ENCODE measurements at regions of chr2 and their contacts with region 1.

Region 1: GRCh38 chr2:42859006-42859552 is 66.7 kb upstream of the HAAO start:
- DNase-seq: peak; percentile 68
- H3K4me3 ChIP-seq: no peak overlapping the region
- H3K27ac ChIP-seq: no peak overlapping the region
- H3K27me3 ChIP-seq: peaks cover under 1% of the 10 kb centered on the region
- CTCF ChIP-seq: peak; percentile 95

Region 2: GRCh38 chr2:42764096-42764495 is 95.0 kb before region 1 on chr2 and contains the start of gene OXER1:
- CTCF ChIA-PET with region 1: no interaction called
- POLR2A ChIA-PET with region 1: no interaction called
- DNase-seq: no peak
- H3K4me3 ChIP-seq: no peak within 1 kb of the TSS
- H3K27ac ChIP-seq: no peak within 1 kb of the TSS
- H3K27me3 ChIP-seq: no peaks in the 10 kb centered on the region
- CTCF ChIP-seq: no peak
- polyA plus RNA-seq, gene OXER1: 0.27 and 0.37 TPM in 2 replicates

Region 3: DNA sequence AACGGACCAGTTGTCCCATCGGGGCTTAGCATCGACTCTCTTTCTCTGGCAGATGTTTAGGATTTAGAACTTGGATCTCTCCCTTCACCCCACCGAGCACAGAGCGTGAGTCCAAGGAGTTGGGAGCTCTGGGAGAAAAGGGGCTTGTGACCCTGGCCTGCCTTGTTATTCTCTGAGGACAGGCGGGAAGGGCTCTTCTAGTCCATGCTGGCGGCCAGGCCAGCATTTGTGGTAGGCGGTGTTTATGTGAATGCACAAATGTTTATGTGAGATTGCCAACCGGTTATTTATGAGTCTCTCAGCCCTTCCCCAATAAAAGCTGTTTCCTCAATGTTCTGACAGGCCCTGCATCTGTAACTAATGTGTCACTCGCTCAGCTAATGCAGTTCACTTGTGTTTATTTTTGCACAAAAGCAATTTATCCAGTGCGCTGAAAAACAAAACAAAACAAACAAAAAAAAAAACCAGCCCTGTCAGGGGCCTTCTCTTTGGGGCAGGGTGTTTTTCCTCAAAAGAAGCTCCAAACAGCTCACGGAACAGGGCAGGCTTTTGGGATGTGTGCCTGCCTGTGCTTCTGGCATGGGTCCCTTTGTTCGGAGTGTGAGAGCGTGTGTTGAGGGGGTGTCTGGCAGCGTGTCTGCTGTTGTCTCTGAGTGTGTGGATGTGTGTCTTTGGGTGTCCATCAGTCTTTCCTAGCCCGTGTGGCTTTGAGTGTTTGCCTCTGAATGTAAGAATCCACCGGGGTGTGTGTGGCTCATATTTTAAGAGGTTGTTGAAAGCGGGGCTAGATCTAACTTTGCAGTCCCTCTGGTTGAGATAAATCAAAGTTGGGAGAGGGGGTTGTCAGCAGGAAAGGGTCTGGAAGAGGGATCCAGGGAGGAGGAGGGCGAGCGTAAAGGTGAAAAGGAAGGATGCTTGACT is 13.9 kb before region 1 on chr2:
- CTCF ChIA-PET with region 1: interaction called, 26 read pairs
- POLR2A ChIA-PET with region 1: no interaction called
- DNase-seq: peak; percentile 82
- H3K4me3 ChIP-seq: no peak overlapping the region
- H3K27ac ChIP-seq: peak overlapping the region; percentile 52
- H3K27me3 ChIP-seq: peaks cover 2% of the 10 kb centered on the region
- CTCF ChIP-seq: no peak

Region 4: GRCh38 chr2:42944779-42945415 is 85.8 kb after region 1 on chr2:
- CTCF ChIA-PET with region 1: interaction called, 43 read pairs
- POLR2A ChIA-PET with region 1: no interaction called
- DNase-seq: no peak
- H3K4me3 ChIP-seq: no peak overlapping the region
- H3K27ac ChIP-seq: no peak overlapping the region
- H3K27me3 ChIP-seq: no peaks in the 10 kb centered on the region
- CTCF ChIP-seq: no peak

Region 5: DNA sequence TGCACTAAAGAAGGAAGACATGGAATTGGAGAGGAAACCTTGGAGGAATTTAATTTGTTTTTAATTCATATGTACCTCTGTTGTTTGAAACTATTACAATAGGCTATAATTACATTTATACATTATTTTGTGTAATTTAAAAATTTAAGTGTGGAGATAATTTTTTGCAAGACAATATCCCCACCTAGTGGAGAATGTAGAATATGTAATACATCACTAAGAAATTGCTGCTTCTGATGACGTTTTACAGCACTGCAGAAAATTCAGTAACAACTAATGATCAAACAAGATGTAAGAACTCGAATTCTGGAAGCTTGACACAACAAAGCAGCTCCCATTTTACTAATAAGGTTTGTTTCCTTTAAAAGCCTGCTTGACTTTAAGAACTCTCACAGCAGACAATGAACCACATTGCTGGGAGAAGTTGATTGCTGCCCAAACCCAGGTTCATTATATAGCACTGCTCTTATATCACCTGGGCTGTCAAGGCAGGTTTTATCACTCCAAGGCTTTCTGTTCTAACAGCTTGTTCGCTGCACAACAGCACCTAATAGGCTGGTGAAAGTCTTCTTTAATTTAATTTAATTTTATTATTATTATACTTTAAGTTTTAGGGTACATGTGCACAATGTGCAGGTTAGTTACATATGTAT is 683.3 kb after region 1 on chr2:
- CTCF ChIA-PET with region 1: interaction called, 14 read pairs
- POLR2A ChIA-PET with region 1: no interaction called
- DNase-seq: no peak
- H3K4me3 ChIP-seq: no peak overlapping the region
- H3K27ac ChIP-seq: no peak overlapping the region
- H3K27me3 ChIP-seq: no peaks in the 10 kb centered on the region
- CTCF ChIP-seq: peak; percentile 50